ENCODE measurements at regions of chr20 and their contacts with region 1.

Region 1: DNA sequence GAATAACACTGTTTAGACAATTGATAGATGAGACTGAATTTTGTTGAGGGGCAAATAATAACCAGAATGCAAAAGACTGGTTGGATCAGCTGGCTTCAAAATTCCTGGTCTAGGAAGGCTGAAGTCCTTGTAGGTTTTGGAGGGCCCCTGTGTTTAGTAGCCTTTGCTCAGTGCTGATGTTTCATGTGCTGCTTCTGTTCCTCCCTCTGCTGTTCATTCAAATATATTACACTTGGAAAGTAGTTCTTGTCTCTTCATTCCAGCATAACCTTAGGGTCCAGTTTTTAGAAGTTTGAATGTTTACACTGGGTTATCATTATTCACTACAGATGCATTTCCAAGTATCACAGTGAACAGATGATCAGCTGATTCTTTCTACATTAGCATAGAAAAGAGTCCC is 72.5 kb downstream of the FLRT3 start:
- DNase-seq: no peak
- H3K4me3 ChIP-seq: no peak overlapping the region
- H3K27me3 ChIP-seq: no peaks in the 10 kb centered on the region
- CTCF ChIP-seq: peak; percentile 59

Region 2: DNA sequence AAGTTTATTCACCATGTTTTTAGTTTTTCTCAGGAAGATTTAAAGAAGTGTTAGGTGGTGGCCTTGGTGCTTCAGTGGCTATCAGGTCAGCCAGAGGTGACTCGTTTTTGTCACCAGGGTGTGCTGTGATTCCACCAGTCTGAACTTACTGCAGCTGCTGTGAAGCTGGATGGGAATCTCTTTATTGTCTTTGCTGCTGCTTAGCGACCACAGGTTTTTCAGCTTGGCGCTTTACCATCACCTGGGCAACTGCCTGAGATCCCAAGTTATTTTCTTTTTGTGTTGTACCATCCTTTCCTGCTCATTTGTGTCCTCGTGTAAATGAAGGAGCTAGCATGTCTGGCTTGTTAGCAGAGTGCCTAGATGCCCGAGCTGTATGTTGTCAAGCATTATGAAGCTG is 122.7 kb before region 1 on chr20:
- CTCF ChIA-PET with region 1: interaction called, 16 read pairs
- POLR2A ChIA-PET with region 1: no interaction called
- DNase-seq: peak; percentile 4
- H3K4me3 ChIP-seq: no peak overlapping the region
- H3K27me3 ChIP-seq: no peaks in the 10 kb centered on the region
- CTCF ChIP-seq: peak; percentile 53

Region 3: GRCh38 chr20:14189794-14190402 is 75.0 kb before region 1 on chr20:
- CTCF ChIA-PET with region 1: interaction called, 48 read pairs
- POLR2A ChIA-PET with region 1: no interaction called
- DNase-seq: no peak
- H3K4me3 ChIP-seq: no peak overlapping the region
- H3K27me3 ChIP-seq: no peaks in the 10 kb centered on the region
- CTCF ChIP-seq: peak; percentile 61

Region 4: GRCh38 chr20:14214046-14214445 is 50.8 kb before region 1 on chr20:
- CTCF ChIA-PET with region 1: no interaction called
- POLR2A ChIA-PET with region 1: no interaction called
- DNase-seq: no peak
- H3K4me3 ChIP-seq: no peak overlapping the region
- H3K27me3 ChIP-seq: no peaks in the 10 kb centered on the region
- CTCF ChIP-seq: no peak

Measured in BJ (cell line).